GM13977 (cell line): ENCODE measurements at regions of chr10 and their contacts with region 1.

Region 1: GRCh38 chr10:80444646-80445319 is 9.3 kb upstream of the TSPAN14 start:
- DNase-seq: peak; percentile 69
- CTCF ChIP-seq: peak; percentile 77

Region 2: DNA sequence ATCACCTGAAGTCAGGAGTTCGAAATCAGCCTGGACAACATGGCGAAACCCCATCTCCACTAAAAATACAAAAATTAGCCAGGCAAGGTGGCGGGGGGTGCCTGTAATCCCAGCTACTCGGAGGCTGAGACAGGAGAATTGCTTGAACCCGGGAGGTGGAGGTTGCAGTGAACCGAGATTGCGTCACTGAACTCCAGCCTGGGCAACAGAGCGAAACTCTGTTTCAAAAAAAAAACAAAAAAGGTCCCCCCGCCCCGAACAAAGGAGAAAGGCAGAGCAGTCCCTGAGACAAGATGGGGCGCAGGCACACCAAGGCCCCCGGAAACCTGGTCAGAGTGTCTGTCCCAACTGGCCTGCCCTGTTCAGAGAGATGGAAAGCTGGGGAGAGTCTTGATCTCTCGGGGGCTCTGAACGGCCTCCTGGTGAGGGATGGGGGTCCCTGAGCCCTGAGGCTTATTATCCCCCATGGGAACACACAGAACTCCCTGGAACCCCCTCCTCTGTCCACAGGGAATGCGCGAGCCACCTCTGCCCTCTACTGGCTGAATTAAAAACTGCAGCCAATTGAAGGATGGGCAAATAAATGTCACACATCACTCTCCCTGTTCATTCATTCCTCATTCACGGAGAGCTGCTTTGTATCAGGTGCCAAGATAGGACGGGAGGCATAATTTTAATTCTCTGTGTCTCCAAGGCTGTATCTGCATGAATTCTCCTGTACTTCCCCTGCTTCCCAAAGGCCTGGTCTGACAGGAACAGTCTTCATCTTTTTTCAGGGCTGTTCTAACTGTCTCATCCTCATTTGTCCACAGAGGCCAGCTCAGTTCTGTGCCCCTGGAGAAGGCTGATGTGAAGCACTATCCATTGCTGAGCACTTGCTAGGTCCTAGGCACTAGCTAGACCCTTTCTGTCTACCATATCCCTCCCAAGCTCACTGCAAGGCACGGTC is 184.2 kb before region 1 on chr10:
- in situ Hi-C with region 1: no loop called
- DNase-seq: peak; percentile 55
- CTCF ChIP-seq: peak; percentile 86

Region 3: GRCh38 chr10:80405626-80406025 is 39.2 kb before region 1 on chr10:
- in situ Hi-C with region 1: no loop called
- DNase-seq: no peak
- CTCF ChIP-seq: no peak

Region 4: DNA sequence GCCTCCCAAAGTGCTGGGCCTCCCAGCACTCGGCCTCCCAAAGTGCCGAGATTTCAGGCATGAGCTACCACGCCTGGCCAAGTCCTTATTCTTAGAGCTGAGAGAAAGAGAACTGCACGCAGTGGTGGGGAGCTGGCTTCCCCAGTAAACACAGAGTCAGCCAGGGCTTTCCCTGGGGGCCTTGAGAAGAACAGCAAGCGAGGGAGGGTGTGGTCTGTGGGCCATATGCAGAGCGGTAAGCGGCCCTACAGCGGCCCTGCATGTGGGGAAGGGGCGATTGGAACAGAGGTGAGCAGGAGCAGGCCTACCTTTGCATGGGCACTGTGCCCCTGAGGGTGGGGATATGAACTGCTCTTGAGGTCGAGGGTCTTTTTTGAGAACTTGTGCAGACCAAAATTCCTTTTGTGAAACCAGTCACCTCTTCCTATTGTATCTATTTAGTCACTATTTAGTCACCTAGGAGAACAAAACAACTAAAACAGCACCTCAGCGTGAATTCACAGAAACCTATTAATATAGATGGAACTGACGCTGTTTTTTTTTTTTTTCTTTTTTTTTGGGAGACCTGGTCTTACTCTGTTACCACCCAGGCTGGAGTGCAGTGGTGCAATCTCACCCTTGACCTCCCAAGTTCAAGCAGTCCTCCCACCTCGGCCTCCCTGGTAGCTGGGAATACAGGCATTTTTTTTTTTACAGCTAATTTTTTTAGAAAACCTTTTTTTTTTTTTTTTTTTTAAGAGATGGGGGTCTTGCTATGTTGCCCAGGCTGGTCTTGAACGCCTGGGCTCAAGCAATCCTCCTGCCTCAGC is 56.0 kb after region 1 on chr10:
- in situ Hi-C with region 1: loop called (anchors 5 kb)
- DNase-seq: peak; percentile 62
- CTCF ChIP-seq: no peak

Region 5: DNA sequence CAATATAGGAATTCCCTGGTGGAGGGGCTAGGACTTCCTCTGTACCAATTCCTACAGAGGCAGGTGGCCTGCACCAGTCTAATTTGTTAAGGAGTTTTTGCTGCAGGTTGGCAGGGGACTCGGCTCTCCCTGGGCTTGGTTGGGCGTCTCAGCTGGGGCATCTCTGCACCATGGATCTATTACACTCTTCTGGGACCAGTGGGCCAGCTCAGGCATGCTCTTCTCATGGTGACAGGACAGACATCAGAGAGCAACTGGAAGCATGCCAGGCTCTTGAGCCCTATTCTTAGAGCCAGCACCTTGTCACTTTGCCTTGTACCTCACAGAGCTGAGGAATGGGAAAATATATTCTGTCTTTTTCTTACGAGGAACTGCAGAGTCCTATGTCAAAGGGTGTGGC is 167.5 kb after region 1 on chr10:
- in situ Hi-C with region 1: no loop called
- DNase-seq: no peak
- CTCF ChIP-seq: no peak